Activated CD8-positive, alpha-beta T cell treated with anti-CD3 and anti-CD28 coated beads for 36 hours (primary cell): ENCODE measurements at regions of chr10 and their contacts with region 1.

Region 1: DNA sequence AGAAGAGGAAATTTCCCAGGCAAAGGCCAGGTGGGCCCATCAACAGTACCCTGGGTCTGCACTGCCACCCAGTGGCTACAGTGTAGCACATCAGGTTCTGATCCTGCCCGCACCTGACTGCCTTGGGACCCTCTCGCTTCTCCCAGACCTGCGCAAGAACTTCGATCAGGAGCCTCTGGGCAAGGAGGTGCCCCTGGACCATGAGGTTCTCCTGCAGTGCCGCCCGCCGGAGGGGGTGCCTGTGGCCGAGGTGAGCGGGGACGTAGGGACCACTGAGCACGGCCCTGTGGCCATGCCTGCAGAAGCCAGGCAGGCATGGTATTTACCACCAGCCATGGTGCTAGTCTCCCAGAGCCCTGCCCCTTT is 33.9 kb upstream of the SLC29A3 start:
- DNase-seq: peak; percentile 56
- ATAC-seq: peak; percentile 90
- H3K4me3 Mint-ChIP-seq: no peak overlapping the region
- H3K27ac Mint-ChIP-seq: no peak overlapping the region
- H3K4me1 Mint-ChIP-seq: no peaks in the 10 kb centered on the region
- H3K27me3 Mint-ChIP-seq: no peaks in the 10 kb centered on the region
- CTCF ChIP-seq: peak; percentile 72

Region 2: GRCh38 chr10:71270301-71271220 is 14.6 kb before region 1 on chr10:
- CTCF ChIA-PET with region 1: interaction called, 22 read pairs
- POLR2A ChIA-PET with region 1: no interaction called
- intact Hi-C with region 1: no loop called
- DNase-seq: peak; percentile 71
- ATAC-seq: peak; percentile 80
- H3K4me3 Mint-ChIP-seq: no peak overlapping the region
- H3K27ac Mint-ChIP-seq: no peak overlapping the region
- H3K4me1 Mint-ChIP-seq: no peaks in the 10 kb centered on the region
- H3K27me3 Mint-ChIP-seq: peaks cover 1% of the 10 kb centered on the region
- CTCF ChIP-seq: no peak